HCT116 (cell line): ENCODE measurements at regions of chr17 and their contacts with region 1.

Region 1: DNA sequence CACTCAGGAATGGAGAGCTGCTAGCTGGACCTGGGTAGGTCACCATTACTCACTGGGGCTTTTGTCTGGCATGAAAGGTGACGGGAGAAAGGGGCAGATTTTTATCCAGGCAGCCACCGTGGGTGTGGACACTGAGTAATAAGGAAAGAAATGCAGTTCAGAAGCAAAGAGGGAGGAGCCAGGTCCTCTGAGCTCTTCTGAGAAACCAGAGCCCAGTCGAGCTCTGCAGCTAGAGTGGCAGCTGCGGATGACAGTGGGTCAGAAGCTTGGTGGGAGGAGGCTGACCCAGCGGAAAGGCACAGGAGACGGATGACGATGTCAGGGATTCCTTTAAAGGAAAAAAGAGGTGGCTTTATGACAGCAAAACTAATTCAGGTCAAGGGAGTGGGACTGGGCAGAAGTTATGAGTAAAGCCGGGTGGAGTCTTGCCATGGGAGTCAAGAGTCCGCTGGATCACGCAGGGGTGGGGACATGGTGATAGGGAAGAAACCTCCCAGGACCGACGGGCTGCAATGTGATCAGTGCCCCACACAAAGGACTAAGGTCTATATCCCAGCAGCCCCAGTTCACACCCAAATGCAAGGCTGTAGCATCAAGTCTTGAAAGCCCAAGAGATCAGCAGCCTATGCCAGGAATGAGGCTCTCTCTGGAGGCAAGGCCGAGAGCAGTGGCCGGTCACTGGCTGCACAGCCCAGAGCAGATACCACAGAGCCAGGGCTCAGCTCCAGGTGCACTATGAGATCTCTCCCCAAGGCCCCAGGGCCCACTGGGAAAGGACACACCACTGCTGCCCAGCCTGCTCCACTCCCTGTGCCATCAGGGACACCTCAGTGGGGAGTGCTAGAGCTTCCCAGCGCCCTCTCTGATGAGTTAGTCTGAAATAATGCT is 6.3 kb upstream of the MNT start:
- DNase-seq: peak; percentile 90
- ATAC-seq: peak; percentile 89
- H3K4me3 ChIP-seq: peak overlapping the region; percentile 7 to 43
- H3K27ac ChIP-seq: peak overlapping the region; percentile 86
- H3K4me1 ChIP-seq: peaks cover 43 to 56% of the 10 kb centered on the region in 2 experiments
- H3K27me3 ChIP-seq: no peaks in the 10 kb centered on the region
- CTCF ChIP-seq: no peak
- POLR2A ChIP-seq: no peak
- RAD21 ChIP-seq: no peak

Region 2: DNA sequence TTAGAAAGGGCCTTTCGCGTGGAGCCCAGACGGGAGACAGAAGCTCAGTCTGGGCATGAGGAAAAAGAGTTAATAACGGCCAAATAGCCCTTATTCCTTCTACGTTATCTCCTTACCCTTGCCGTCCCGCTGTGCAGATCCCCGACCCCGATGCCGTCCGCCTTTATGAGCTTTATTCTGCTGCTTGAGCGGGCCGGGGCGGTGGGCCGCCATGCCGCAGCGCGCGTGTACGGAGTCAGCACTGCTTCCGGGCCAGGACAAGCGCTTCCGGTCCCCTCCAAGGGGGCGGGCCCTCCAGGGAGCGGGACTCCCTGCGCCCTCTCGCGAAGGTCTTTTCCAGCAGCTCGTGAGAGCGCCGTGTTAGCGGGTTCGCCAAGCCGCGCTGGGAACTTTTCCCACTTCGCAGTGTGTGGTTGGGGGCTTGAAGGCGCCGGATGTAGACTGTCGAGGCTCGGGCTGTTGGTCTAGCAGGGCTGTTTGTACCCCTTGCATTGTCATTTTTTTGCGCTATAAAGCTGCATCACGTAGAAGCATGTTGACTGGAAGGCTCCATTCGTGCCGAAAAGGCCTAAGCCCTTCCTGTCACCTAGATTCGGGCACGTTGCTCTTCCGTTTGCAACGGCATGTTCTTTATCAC is 70.8 kb before region 1 on chr17 and contains the start of gene TSR1:
- CTCF ChIA-PET with region 1: no interaction called
- POLR2A ChIA-PET with region 1: interaction called, 4 read pairs
- RAD21 ChIA-PET with region 1: no interaction called
- intact Hi-C with region 1: loop called (anchors 5 kb)
- DNase-seq: peak; percentile 74
- ATAC-seq: peak; percentile 81
- H3K4me3 ChIP-seq: peak within 1 kb of the TSS; percentile 82 to 99
- H3K27ac ChIP-seq: peak within 1 kb of the TSS; percentile 86
- H3K4me1 ChIP-seq: peaks cover 2 to 29% of the 10 kb centered on the region in 2 experiments; a peak in 3 of 4 replicates
- H3K27me3 ChIP-seq: no peaks in the 10 kb centered on the region
- CTCF ChIP-seq: no peak
- POLR2A ChIP-seq: peak; percentile 96
- RAD21 ChIP-seq: no peak
- total RNA-seq, gene TSR1: 77.2 TPM

Region 3: GRCh38 chr17:2386400-2387085 is 20.6 kb before region 1 on chr17:
- CTCF ChIA-PET with region 1: interaction called, 41 read pairs
- POLR2A ChIA-PET with region 1: interaction called, 7 read pairs
- RAD21 ChIA-PET with region 1: interaction called, 5 to 6 read pairs
- intact Hi-C with region 1: no loop called
- DNase-seq: no peak
- ATAC-seq: no peak
- H3K4me3 ChIP-seq: no peak overlapping the region
- H3K27ac ChIP-seq: no peak overlapping the region
- H3K4me1 ChIP-seq: peaks cover 5 to 27% of the 10 kb centered on the region in 2 experiments
- H3K27me3 ChIP-seq: no peaks in the 10 kb centered on the region
- CTCF ChIP-seq: no peak
- POLR2A ChIP-seq: no peak
- RAD21 ChIP-seq: no peak

Region 4: DNA sequence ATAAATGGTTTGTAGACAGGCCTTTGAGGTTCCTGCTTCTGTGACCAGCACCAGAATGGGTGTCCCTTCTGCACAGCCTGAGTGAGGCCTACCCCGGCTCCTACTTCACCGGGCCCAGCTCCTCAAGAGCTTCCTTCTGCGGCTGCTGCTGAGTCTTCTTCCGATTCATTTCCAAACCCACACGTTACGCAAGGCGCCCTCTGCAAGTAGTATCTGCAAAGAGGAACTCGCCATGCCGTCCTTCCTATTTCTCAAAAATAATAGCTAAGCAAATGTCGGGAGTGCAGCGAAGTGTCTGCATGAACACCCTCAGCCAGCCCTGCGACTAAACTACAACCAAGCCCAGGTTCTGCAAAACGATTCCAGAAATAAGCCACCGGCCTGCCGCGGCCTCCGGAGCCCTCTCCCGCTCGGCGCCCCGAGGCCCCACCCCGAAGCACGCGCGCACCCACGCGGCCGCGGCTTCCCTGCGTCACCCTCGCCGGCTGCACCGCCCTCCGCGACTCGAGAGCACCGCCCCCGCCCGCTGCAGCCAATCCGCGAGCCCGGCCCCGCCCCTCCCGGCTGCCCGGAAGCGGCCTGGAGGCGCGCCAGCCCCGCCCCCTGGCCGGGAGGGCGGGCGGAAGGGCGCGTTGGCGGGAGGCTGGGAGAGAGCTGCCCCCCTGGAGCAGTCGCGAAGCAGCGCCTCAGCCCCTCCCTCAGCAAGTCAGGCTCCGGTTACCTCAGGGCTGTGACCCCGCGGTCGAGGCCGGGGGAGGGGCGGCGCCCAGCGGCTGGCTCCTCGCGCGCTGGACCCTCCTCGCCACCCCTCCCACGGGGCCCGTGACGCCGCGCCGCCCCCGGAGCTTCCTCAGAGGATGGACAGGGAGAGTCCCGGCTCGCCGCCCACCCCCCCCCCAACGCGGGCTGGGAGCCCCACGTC is 14.6 kb before region 1 on chr17:
- CTCF ChIA-PET with region 1: interaction called, 3 read pairs
- POLR2A ChIA-PET with region 1: interaction called, 12 read pairs
- RAD21 ChIA-PET with region 1: no interaction called
- intact Hi-C with region 1: no loop called
- DNase-seq: peak; percentile 77
- ATAC-seq: peak; percentile 66
- H3K4me3 ChIP-seq: peak overlapping the region; percentile 63 to 69
- H3K27ac ChIP-seq: peak overlapping the region; percentile 100
- H3K4me1 ChIP-seq: peaks cover 38 to 75% of the 10 kb centered on the region in 2 experiments
- H3K27me3 ChIP-seq: no peaks in the 10 kb centered on the region
- CTCF ChIP-seq: no peak
- POLR2A ChIP-seq: peak; percentile 19
- RAD21 ChIP-seq: no peak

Region 5: DNA sequence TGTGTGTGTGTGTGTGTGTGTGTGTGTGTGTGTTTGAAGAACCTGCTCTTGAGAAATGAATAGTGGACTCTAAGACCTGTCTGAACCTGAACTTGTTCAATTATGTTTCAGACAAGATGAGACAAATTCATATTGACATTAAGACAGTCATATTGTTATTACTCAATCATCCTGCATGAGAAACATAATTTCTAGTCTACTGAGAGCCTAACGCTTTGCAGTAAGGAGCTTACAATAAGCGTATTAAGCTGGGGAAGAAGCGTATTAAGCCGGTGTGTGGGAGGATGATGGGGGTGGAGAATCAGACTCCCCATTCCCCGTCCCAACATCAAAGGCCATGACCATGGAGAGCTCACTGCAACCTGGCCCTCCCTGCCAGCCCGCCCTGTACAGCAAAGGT is 16.1 kb after region 1 on chr17:
- CTCF ChIA-PET with region 1: no interaction called
- POLR2A ChIA-PET with region 1: no interaction called
- RAD21 ChIA-PET with region 1: no interaction called
- intact Hi-C with region 1: no loop called
- DNase-seq: no peak
- ATAC-seq: no peak
- H3K4me3 ChIP-seq: no peak overlapping the region
- H3K27ac ChIP-seq: no peak overlapping the region
- H3K4me1 ChIP-seq: no peaks in the 10 kb centered on the region
- H3K27me3 ChIP-seq: no peaks in the 10 kb centered on the region
- CTCF ChIP-seq: no peak
- POLR2A ChIP-seq: no peak
- RAD21 ChIP-seq: no peak